CD4-positive, alpha-beta T cell (primary cell): ENCODE measurements at regions of chr17 and their contacts with region 1.

Region 1: DNA sequence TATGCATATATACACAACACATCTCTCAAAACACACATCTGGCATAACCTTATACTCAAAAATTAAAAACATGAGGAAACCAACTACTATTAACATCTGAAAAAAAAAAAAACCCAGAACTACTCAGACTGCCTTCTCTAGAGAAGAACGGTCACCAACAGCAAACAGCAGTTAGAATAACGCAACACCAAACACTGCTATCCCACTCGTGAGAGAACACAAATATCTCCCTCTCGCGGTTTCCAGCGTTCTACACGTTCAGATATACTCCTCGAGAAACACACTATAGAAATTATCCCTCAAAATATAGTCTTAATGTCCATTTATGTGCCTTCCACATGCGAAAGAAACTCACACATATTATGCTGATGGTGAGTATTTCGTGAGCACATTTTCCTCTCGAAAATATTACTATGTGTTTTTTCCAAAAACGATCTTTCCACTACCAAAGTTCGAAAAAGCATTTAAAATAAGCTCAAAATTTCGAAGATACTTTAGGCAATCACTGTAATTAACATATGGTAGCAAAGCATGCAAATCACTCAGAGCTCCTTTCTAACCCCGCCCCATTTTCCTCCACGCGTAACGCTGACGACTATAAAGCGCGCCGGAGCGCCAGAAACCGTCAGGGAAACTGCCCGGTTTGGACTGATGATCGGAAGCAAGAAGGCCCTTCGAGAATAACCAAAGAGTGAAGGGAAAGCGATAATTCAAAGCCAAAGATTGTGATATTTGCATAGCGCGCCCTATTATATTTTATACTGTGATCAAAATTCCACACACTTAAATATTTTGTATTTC is 60.1 kb downstream of the TEX14 start:
- DNase-seq: peak; percentile 85 to 97 (median 90)
- ATAC-seq: peak; percentile 89
- H3K4me3 ChIP-seq: peak overlapping the region; percentile 54
- H3K4me3 Mint-ChIP-seq: no peak overlapping the region
- H3K27ac ChIP-seq: peak overlapping the region; percentile 66 to 94
- H3K27ac Mint-ChIP-seq: no peak overlapping the region
- H3K4me1 ChIP-seq: peaks cover 10% of the 10 kb centered on the region
- H3K4me1 Mint-ChIP-seq: no peaks in the 10 kb centered on the region
- H3K27me3 ChIP-seq: no peaks in the 10 kb centered on the region
- H3K27me3 Mint-ChIP-seq: no peaks in the 10 kb centered on the region
- CTCF ChIP-seq: no peak

Region 2: DNA sequence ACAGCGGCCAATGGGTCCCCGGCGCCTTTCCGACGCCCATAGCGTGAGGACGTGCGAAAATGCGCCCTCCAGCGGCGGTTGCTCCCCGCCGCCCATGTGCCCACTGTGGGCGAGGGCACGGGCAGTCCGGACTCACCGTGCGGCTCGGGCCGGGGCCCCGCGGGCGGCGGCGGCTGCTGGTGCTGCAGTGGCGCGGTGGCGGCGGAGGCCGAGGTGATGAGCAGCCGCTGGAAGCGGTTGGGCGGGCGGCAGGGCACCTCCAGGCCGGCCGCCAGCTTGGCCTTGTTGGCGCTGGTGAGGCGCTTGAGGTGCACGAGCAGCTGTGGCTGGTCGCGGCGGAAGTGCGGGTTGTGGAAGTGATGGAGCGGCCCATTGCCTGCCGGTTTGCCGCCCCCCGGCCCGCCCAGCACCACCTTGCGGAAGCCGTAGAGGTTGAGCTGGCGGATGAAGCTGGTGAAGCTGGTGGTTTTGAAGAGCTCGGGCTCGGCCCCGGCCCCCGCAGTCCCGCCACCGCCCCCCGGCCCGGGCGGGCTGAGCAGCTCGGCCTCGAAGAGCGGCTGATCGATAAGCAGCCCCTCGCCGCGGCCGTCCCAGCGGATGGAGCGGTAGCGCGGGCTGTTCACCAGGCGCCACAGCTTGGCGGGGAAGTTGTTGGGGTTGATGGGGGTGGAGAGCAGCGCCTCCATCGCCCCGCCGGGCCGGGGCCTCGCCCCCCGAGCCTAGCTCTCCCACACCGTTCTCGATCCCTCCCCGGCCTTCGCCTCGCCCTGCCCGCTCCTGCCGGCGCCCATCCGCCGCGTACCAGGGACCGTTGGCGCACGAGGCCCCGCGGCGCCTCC is 143.9 kb before region 1 on chr17 and contains the start of gene HSF5:
- CTCF ChIA-PET with region 1: no interaction called
- POLR2A ChIA-PET with region 1: interaction called, 13 read pairs
- intact Hi-C with region 1: no loop called
- DNase-seq: peak; percentile 52 to 88 (median 75)
- ATAC-seq: peak; percentile 93
- H3K4me3 ChIP-seq: peak within 1 kb of the TSS; percentile 52
- H3K4me3 Mint-ChIP-seq: peak within 1 kb of the TSS; percentile 62
- H3K27ac ChIP-seq: peak within 1 kb of the TSS in 1 of 2 donors; percentile 43
- H3K27ac Mint-ChIP-seq: peak within 1 kb of the TSS; percentile 39
- H3K4me1 ChIP-seq: peaks cover 13% of the 10 kb centered on the region
- H3K4me1 Mint-ChIP-seq: peaks cover 5% of the 10 kb centered on the region
- H3K27me3 ChIP-seq: no peaks in the 10 kb centered on the region
- H3K27me3 Mint-ChIP-seq: no peaks in the 10 kb centered on the region
- CTCF ChIP-seq: peak; percentile 68
- total RNA-seq, gene HSF5: 1.6 to 1.7 TPM

Region 3: DNA sequence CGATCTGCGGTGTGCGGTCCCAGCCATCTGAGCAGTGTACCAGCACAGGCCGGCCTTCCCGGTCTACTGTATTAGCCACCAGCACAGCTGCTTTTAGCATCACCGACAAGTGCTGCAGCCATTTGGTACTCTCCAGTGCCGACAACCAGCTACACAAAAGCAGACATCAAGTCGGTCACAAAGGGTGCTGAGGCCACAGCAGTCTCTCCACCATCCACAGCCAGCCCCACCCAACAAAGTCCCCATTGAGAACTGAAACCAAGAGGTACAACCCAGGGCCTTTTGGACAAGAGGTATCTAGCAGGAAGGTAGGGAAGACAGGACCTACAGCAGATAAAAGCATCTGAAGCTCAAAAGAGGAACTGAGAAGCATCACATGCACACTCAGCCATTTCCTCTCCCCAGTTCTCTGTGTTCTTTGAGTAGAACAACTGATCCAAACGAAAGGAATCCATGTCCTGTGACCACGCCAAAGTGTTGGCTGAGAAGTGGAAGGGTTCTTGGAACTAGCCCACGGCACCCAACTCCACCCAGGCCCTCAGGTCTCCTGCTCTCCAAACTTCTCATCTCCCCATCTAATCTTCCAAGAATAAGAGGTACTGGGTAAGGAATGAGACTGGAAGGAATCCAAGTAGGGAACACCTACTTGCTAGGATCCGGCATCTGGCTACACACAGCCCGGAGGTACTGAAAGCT is 126.7 kb before region 1 on chr17:
- CTCF ChIA-PET with region 1: no interaction called
- POLR2A ChIA-PET with region 1: no interaction called
- intact Hi-C with region 1: no loop called
- DNase-seq: no peak
- ATAC-seq: no peak
- H3K4me3 ChIP-seq: no peak overlapping the region
- H3K4me3 Mint-ChIP-seq: no peak overlapping the region
- H3K27ac ChIP-seq: no peak overlapping the region
- H3K27ac Mint-ChIP-seq: no peak overlapping the region
- H3K4me1 ChIP-seq: peaks cover 2% of the 10 kb centered on the region
- H3K4me1 Mint-ChIP-seq: peaks cover under 1% of the 10 kb centered on the region
- H3K27me3 ChIP-seq: no peaks in the 10 kb centered on the region
- H3K27me3 Mint-ChIP-seq: no peaks in the 10 kb centered on the region
- CTCF ChIP-seq: no peak

Region 4: DNA sequence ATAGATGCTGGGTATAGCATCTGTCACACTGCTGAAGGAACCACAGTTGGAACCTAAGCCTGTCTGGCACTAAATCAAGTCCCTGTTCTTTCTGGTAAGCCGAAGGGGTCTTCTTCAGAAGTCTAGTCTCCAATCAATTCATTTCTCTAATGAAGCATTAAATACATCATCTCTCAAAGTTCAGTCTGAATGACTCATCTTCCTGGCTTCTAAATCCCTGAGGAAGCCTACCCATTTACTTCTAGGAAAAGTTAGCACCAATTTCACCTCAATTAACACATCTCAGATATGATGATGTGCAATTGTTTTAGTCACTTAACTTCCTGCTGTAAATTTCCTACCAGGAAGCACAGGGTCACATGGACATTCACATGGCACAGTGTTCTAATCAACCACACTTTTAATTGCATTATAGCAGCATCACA is 10.2 kb after region 1 on chr17:
- CTCF ChIA-PET with region 1: no interaction called
- POLR2A ChIA-PET with region 1: interaction called, 16 read pairs
- intact Hi-C with region 1: no loop called
- DNase-seq: no peak
- ATAC-seq: no peak
- H3K4me3 ChIP-seq: no peak overlapping the region
- H3K4me3 Mint-ChIP-seq: no peak overlapping the region
- H3K27ac ChIP-seq: no peak overlapping the region
- H3K27ac Mint-ChIP-seq: no peak overlapping the region
- H3K4me1 ChIP-seq: no peaks in the 10 kb centered on the region
- H3K4me1 Mint-ChIP-seq: no peaks in the 10 kb centered on the region
- H3K27me3 ChIP-seq: no peaks in the 10 kb centered on the region
- H3K27me3 Mint-ChIP-seq: no peaks in the 10 kb centered on the region
- CTCF ChIP-seq: no peak

Region 5: GRCh38 chr17:58692239-58693055 is 60.7 kb after region 1 on chr17 and contains the start of gene RAD51C:
- CTCF ChIA-PET with region 1: interaction called, 3 read pairs
- POLR2A ChIA-PET with region 1: interaction called, 33 read pairs
- intact Hi-C with region 1: loop called in 1 of 2 experiments (anchors 2 kb)
- DNase-seq: peak; percentile 70 to 92 (median 84)
- ATAC-seq: peak; percentile 96
- H3K4me3 ChIP-seq: peak within 1 kb of the TSS; percentile 79
- H3K4me3 Mint-ChIP-seq: peak within 1 kb of the TSS; percentile 93
- H3K27ac ChIP-seq: peak within 1 kb of the TSS; percentile 66 to 83
- H3K27ac Mint-ChIP-seq: peak within 1 kb of the TSS; percentile 86
- H3K4me1 ChIP-seq: peaks cover 13% of the 10 kb centered on the region
- H3K4me1 Mint-ChIP-seq: peaks cover 28% of the 10 kb centered on the region
- H3K27me3 ChIP-seq: no peaks in the 10 kb centered on the region
- H3K27me3 Mint-ChIP-seq: no peaks in the 10 kb centered on the region
- CTCF ChIP-seq: no peak
- total RNA-seq, gene RAD51C: 10.4 to 11.6 TPM